Prostate gland (tissue), 2 donors: ENCODE measurements at regions of chr4 and their contacts with region 1.

Region 1: GRCh38 chr4:159102622-159103383 is at the start of gene RAPGEF2:
- DNase-seq: peak; percentile 95
- H3K4me3 ChIP-seq: peak within 1 kb of the TSS; percentile 92 to 93
- H3K27ac ChIP-seq: peak within 1 kb of the TSS; percentile 90 to 93
- H3K4me1 ChIP-seq: no peaks in the 10 kb centered on the region
- H3K27me3 ChIP-seq: no peaks in the 10 kb centered on the region
- CTCF ChIP-seq: peak in 1 of 4 experiments; percentile 14
- POLR2A ChIP-seq: peak; percentile 99
- total RNA-seq, gene RAPGEF2: 29.2 to 29.5 TPM

Region 2: GRCh38 chr4:159010563-159011260 is 92.1 kb before region 1 on chr4:
- intact Hi-C with region 1: loop called (anchors 5 kb)
- DNase-seq: peak; percentile 85
- H3K4me3 ChIP-seq: no peak overlapping the region
- H3K27ac ChIP-seq: no peak overlapping the region
- H3K4me1 ChIP-seq: peaks cover 4% of the 10 kb centered on the region
- H3K27me3 ChIP-seq: no peaks in the 10 kb centered on the region
- CTCF ChIP-seq: no peak
- POLR2A ChIP-seq: no peak

Region 3: DNA sequence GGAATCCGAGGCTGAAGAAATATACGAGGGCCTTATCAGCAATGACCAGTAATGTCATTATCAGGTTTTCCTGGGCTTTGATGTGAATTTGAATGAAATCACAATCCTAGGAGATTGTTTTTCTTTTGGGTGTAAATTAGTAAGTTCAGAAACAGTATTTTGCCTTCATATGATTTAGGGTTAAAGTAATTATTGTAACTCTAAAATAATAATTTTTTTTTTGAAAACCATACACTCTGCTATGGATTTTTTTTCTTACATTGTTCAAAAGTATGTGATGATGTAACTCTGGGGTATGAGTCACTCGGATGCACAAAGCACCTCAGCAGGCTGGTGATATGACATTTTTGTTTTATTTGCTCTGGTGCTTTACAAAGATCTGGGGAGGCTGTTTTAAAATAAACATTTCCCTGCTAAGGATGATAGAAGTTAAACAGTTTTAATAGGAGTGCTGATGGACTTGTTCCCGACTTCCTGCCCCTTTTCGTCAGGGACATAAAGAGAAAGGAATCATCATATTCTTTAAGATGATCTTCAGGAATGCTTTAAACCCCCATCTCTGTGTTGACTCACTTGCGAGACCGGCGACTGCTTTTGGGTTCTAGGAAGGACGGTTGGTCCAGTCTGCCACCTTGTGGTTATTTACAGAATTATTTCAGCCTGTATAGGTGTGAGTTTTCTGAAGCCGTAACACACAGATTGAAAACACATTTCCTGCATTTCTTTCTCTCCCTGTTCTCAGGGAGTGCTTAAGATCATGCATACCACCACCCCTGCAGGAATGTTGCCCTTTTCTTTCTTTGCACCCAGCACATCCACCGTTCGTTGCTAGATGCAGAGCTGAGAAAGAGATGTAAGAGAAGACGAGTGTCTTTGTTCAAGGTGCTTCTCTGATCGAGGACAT is 72.5 kb after region 1 on chr4:
- intact Hi-C with region 1: loop called (anchors 10 kb)
- DNase-seq: peak; percentile 73
- H3K4me3 ChIP-seq: no peak overlapping the region
- H3K27ac ChIP-seq: no peak overlapping the region
- H3K4me1 ChIP-seq: no peaks in the 10 kb centered on the region
- H3K27me3 ChIP-seq: no peaks in the 10 kb centered on the region
- CTCF ChIP-seq: peak; percentile 49 to 87 (median 83)
- POLR2A ChIP-seq: no peak

Region 4: DNA sequence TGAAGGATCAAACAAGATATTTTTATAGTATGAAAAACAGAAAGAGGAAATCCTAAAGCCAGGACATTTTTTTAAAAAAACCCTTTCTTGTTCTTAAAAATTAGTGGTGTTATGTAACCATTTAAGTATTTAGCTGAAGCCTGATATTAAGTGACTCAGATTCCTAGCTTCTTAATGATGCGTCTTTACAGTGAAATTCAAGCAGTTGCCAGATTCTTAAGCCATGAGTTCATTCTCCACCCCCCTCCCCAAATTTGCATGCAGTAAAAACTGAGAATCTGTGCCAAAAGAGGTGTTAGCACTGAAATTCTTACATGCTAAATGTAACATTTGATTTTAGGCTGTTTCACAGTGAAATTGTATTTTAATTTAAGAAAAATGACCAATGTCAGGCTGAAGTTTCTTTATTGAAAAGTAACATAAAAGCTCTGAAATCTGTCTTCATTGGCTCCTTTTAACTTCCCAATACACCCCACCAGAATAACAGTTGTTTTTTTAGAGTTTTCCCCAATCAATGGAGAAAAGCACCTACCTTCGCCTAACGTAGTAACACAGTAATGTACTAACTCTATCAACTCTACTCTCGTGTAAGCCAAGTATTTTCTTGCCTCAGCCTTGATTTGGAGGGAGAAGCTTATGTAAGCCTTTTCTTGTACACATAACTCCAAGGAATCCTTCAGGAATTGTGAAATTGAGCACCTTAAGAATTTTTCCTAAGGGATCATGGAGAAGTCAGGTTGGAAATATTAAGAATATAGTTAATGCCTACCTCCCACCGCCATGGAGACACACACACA is 181.1 kb after region 1 on chr4:
- intact Hi-C with region 1: no loop called
- DNase-seq: no peak
- H3K4me3 ChIP-seq: no peak overlapping the region
- H3K27ac ChIP-seq: no peak overlapping the region
- H3K4me1 ChIP-seq: no peaks in the 10 kb centered on the region
- H3K27me3 ChIP-seq: no peaks in the 10 kb centered on the region
- CTCF ChIP-seq: no peak
- POLR2A ChIP-seq: no peak